Gastrocnemius medialis (tissue), 4 donors: ENCODE measurements at regions of chr15 and their contacts with region 1.

Region 1: DNA sequence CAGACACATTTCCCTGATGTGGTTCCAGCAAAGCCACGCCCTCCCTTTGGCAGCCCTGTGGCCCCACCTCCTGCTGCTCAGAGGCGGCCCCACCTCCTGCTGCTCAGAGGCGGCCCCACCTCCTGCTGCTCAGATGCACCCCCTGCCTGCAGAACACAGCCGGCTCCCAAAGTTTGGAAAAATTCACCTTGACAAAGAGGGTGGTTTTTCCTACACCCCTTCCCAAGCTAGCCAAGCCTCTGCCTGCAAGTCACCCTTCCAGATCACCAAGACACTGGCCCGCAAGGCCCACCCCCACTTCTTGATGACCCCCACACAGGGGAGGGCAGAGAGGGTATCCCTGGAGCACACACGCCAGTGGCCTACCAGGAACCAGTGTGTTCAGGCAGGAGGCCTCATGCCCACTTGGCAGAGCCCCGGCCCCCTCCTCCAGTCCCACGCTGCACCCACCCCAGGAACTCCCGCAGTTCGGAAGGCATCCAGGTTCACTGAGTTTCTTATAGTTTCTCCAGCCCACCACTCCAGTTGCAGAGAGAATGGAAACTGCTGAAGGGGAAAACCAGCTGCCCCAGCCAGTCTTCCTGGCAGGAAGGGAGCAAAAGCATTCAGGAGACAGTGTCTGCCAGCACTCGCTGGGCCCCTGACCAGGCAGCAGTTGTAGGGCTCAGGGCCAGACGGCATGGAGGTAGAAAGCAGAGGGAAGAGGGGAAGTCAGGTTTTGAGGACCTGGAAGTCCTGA is 2.3 kb upstream of the HAPLN3 start:
- DNase-seq: peak; percentile 56 to 88
- ATAC-seq: peak; percentile 43 to 62
- H3K4me3 ChIP-seq: no peak overlapping the region
- H3K27ac ChIP-seq: peak overlapping the region; percentile 71 to 85 (median 79)
- H3K4me1 ChIP-seq: peaks cover 22 to 49% of the 10 kb centered on the region in 2 donors
- H3K27me3 ChIP-seq: peaks cover 10 to 15% (median 14%) of the 10 kb centered on the region in 3 donors
- CTCF ChIP-seq: peak; percentile 52 to 77 (median 60)
- POLR2A ChIP-seq: no peak

Region 2: DNA sequence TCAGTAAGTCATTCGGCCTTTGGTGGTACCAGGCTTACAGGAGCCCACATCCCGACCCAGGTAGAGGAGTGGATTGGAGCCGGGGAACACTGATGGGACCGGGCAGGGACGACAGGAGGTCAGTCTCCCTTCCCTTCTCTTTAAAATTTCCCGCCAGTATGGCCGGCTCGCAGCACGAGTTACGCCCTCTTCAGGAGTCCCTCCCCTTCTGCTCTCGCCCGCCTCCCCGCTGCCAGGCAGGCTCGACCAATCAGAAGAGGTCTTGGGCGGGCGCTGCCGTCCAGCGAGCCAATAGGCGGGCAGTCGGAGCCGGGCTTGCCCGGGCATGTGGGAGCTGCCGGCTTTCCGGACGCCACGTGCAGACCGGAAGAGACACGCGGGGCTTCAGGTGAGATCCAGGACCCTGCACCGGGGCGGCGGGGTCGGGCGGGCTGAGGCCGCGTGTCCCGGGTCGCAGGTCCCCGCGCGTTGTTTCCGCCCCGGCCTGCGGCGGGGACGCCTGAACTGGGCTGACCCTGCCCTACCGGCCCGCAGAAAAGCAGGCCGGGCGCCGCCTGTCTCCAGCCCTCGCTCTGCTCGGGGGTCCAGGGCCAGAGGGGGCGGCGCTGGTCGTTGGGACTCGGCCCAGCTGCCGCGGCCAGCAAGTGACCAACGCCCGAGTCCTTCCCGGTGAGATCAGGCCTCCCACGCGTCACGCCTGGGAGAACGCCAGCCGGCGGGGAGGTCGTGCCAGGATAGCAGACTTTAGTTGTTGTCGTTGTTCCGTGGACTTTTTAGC is 276.4 kb before region 1 on chr15 and contains the start of gene AEN:
- in situ Hi-C with region 1: no loop called
- intact Hi-C with region 1: loop called (anchors 5 kb)
- DNase-seq: peak; percentile 94 to 96
- ATAC-seq: peak; percentile 99
- H3K4me3 ChIP-seq: peak within 1 kb of the TSS; percentile 74 to 99 (median 88)
- H3K27ac ChIP-seq: peak within 1 kb of the TSS; percentile 80 to 88 (median 86)
- H3K4me1 ChIP-seq: peaks cover 14 to 31% of the 10 kb centered on the region in 2 donors
- H3K27me3 ChIP-seq: no peaks in the 10 kb centered on the region
- CTCF ChIP-seq: no peak
- POLR2A ChIP-seq: peak; percentile 54 to 69
- total RNA-seq, gene AEN: 16.1 to 19.2 (median 17.3) TPM

Region 3: DNA sequence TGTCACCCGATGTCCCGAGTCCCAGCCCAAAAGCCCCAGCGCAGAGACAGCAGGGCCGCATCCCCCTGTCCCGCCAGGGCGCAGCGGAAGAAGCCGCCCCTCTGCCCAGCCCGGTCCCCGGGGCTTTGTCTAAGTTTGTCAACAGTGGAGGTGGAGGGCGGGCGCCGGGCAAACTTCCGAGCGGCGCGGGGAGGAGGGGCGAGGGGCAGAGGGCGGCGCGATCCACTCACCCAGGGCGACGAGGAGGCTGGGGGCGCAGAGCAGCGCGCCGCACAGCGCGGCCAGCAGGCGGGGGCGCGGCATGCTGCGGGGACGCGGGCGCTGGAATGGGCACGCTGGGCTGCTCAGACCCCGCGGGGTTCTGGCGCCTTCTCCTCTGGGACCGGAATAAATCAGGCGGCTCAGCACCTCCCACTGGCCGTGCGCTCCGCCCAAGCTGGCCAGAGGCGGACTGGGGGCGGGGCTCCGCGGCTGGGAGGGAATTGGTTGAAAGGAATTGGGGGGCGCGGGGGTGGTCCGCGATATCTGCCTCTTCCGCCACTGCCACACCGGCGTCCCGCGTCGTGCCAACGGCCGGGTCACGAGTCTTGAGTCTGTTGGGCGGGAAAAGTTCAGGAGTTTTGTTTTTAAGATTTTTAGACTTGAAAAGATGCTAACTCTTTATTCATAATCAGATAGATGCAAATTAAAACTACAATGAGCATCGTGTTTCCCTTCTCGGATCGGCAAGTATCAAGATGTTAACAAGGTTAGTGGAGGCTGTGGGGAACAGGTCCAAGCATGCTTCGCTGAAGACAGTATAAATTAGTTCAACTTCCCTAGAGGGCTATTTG is 15.6 kb after region 1 on chr15 and contains the start of gene MFGE8:
- in situ Hi-C with region 1: no loop called
- intact Hi-C with region 1: loop called (anchors 1 kb)
- DNase-seq: peak; percentile 74 to 86
- ATAC-seq: peak; percentile 58 to 60
- H3K4me3 ChIP-seq: peak within 1 kb of the TSS; percentile 70 to 92 (median 86)
- H3K27ac ChIP-seq: peak within 1 kb of the TSS; percentile 92 to 99 (median 97)
- H3K4me1 ChIP-seq: peaks cover 40 to 42% of the 10 kb centered on the region in 2 donors
- H3K27me3 ChIP-seq: no peaks in the 10 kb centered on the region
- CTCF ChIP-seq: peak in 2 of 5 experiments; percentile 25 to 35
- POLR2A ChIP-seq: peak; percentile 99
- total RNA-seq, gene MFGE8: 239 to 437 (median 395) TPM

Region 4: DNA sequence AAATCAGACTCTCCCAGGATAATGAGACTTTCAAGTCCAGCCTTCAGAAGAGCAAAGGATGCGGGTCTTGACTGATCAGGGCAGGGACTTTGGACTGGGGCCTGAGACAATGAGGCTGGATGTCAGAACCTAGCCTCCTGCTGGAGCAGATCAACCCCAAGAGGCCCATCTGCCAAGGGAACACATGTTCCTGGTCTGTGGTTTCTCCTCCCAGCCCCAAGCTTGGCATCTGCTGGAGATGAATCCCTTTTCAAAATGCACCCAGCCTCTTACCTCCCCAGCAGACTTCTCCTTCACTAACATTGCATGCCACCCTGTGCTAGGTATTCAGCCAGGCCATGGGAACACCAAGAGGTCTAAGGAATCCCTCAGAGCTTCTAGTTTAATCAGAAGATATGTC is 59.3 kb after region 1 on chr15:
- in situ Hi-C with region 1: no loop called
- intact Hi-C with region 1: no loop called
- DNase-seq: no peak
- ATAC-seq: no peak
- H3K4me3 ChIP-seq: no peak overlapping the region
- H3K27ac ChIP-seq: no peak overlapping the region
- H3K4me1 ChIP-seq: peaks cover 6% of the 10 kb centered on the region in 2 donors
- H3K27me3 ChIP-seq: no peaks in the 10 kb centered on the region
- CTCF ChIP-seq: no peak
- POLR2A ChIP-seq: no peak

Region 5: GRCh38 chr15:89017370-89018066 is 119.9 kb after region 1 on chr15:
- in situ Hi-C with region 1: loop called (anchors 5 to 10 kb)
- intact Hi-C with region 1: loop called (anchors 2 kb)
- DNase-seq: peak; percentile 50 to 70
- ATAC-seq: peak; percentile 66 to 70
- H3K4me3 ChIP-seq: peak overlapping the region; percentile 15 to 46 (median 34)
- H3K27ac ChIP-seq: peak overlapping the region; percentile 56 to 80 (median 64)
- H3K4me1 ChIP-seq: peaks cover 16 to 28% of the 10 kb centered on the region in 2 donors
- H3K27me3 ChIP-seq: no peaks in the 10 kb centered on the region
- CTCF ChIP-seq: peak; percentile 70 to 88 (median 87)
- POLR2A ChIP-seq: no peak

Region 6: GRCh38 chr15:89171136-89172072 is 273.8 kb after region 1 on chr15:
- in situ Hi-C with region 1: loop called in 3 of 4 experiments (anchors 10 to 25 kb)
- intact Hi-C with region 1: loop called (anchors 5 kb)
- DNase-seq: peak in 1 of 2 donors; percentile 58
- ATAC-seq: no peak
- H3K4me3 ChIP-seq: no peak overlapping the region
- H3K27ac ChIP-seq: peak overlapping the region in 2 of 4 donors; percentile 6 to 61
- H3K4me1 ChIP-seq: peaks cover 28 to 35% of the 10 kb centered on the region in 2 donors
- H3K27me3 ChIP-seq: no peaks in the 10 kb centered on the region
- CTCF ChIP-seq: peak; percentile 50 to 75 (median 66)
- POLR2A ChIP-seq: no peak

Region 7: DNA sequence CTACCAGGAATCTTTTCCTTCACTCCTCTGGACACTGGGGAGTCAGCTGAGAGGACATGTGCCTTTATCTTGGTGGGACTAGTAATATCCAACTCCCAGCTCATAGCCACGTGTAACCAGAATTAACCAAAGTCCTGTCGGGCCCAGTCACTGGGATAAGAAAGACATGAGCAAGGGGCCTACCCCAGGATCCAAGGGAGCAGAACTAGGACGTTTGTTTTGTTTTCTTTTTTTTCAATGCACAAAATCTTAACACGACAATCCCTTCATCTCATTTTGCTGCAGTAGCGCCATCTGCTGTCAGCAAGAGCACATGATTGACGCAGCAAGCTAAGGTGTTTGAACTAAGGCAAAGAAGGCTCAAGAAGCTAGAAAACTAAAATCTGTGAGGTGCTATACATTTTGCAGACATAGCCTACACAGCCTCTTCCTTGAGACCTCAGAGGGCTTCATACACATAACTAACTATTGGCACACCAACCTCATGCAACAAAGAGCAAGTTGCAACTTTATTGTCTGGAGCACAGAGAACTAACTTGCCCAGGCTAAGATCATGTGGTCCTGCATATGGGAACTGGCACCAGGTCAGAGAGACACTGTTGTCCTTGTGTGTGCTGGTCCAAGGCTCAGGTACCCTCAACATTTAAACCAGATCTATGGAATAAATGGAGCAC is 280.1 kb after region 1 on chr15:
- in situ Hi-C with region 1: loop called in 3 of 4 experiments (anchors 10 to 25 kb)
- intact Hi-C with region 1: loop called (anchors 5 kb)
- DNase-seq: peak in 1 of 2 donors; percentile 53
- ATAC-seq: peak in 1 of 2 donors; percentile 57
- H3K4me3 ChIP-seq: no peak overlapping the region
- H3K27ac ChIP-seq: peak overlapping the region in 2 of 4 donors; percentile 25 to 57
- H3K4me1 ChIP-seq: peaks cover 6 to 9% of the 10 kb centered on the region in 2 donors
- H3K27me3 ChIP-seq: no peaks in the 10 kb centered on the region
- CTCF ChIP-seq: peak; percentile 70 to 87 (median 83)
- POLR2A ChIP-seq: no peak